Caco-2 (cell line): ENCODE measurements at regions of chr5 and their contacts with region 1.

Region 1: DNA sequence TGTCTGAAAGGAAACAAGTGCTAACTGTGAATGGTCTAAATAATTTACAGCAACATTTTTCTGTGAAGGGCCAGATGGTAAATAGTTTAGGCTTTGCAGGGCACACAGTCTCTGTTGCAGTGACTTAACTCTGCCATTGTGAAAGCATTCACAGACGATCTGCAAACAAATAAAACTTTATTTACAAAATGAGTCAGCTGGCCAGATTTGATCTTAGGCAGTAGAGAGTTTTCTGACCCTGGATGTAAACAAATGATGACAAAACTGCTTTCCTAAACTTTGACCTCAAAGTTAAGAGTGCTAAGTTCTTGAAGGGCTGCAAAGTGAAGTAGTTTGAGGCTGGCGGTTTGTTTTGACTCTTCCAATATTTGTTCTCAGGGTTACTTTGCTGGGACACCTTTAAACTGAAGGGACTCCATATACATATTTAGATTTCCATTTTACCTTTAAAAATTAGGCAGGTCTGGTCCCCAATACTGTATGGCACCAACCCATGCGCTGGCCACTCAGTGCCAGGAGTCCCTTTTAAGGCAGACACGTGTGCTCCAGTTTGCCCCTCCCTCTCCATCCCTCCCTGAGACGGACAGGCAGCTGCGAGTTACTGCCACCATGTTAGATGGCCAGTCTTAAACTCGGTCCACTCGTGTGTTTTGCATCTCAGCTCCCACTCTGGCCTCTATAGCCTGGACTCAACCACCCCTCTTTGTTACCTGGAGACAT is 4.0 kb upstream of the ADAMTS16 start:
- DNase-seq: peak in 1 of 2 experiments; percentile 63
- H3K4me3 ChIP-seq: no peak overlapping the region
- H3K4me3 Mint-ChIP-seq: peak overlapping the region; percentile 44
- H3K27ac Mint-ChIP-seq: peak overlapping the region; percentile 71
- H3K4me1 ChIP-seq: peaks cover 19% of the 10 kb centered on the region
- H3K4me1 Mint-ChIP-seq: peaks cover 13% of the 10 kb centered on the region
- H3K27me3 ChIP-seq: no peaks in the 10 kb centered on the region
- H3K27me3 Mint-ChIP-seq: no peaks in the 10 kb centered on the region
- CTCF ChIP-seq: no peak

Region 2: GRCh38 chr5:4879693-4880303 is 256.3 kb before region 1 on chr5:
- CTCF ChIA-PET with region 1: no interaction called
- POLR2A ChIA-PET with region 1: no interaction called
- intact Hi-C with region 1: loop called (anchors 1 kb)
- DNase-seq: peak; percentile 77 to 87
- H3K4me3 ChIP-seq: no peak overlapping the region
- H3K4me3 Mint-ChIP-seq: no peak overlapping the region
- H3K27ac Mint-ChIP-seq: peak overlapping the region; percentile 38
- H3K4me1 ChIP-seq: no peaks in the 10 kb centered on the region
- H3K4me1 Mint-ChIP-seq: no peaks in the 10 kb centered on the region
- H3K27me3 ChIP-seq: no peaks in the 10 kb centered on the region
- H3K27me3 Mint-ChIP-seq: no peaks in the 10 kb centered on the region
- CTCF ChIP-seq: peak; percentile 94 to 96

Region 3: DNA sequence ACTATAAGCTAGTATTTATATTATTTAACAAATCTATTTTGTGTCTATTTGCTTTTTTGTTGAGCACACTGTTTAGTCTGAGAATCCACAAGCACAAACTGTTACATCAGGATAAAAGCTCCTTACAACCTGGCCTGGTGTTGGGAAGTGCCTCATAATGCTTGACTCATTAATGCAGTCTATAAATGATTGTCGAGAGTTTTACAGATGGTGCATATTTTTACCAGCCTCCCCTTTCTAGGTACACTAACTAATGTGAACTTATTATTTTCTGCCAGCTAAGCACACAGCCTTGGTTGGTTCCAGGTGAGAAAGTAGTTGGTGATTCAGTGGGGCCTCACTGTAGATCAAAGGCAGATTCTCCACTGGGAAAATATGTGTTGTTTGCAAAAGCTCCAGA is 147.0 kb before region 1 on chr5:
- CTCF ChIA-PET with region 1: no interaction called
- POLR2A ChIA-PET with region 1: no interaction called
- intact Hi-C with region 1: loop called (anchors 1 kb)
- DNase-seq: peak in 1 of 2 experiments; percentile 34
- H3K4me3 ChIP-seq: no peak overlapping the region
- H3K4me3 Mint-ChIP-seq: no peak overlapping the region
- H3K27ac Mint-ChIP-seq: peak overlapping the region; percentile 76
- H3K4me1 ChIP-seq: peaks cover 30% of the 10 kb centered on the region
- H3K4me1 Mint-ChIP-seq: peaks cover 15% of the 10 kb centered on the region
- H3K27me3 ChIP-seq: no peaks in the 10 kb centered on the region
- H3K27me3 Mint-ChIP-seq: no peaks in the 10 kb centered on the region
- CTCF ChIP-seq: no peak

Region 4: GRCh38 chr5:5063533-5063953 is 72.6 kb before region 1 on chr5:
- CTCF ChIA-PET with region 1: no interaction called
- POLR2A ChIA-PET with region 1: no interaction called
- intact Hi-C with region 1: loop called (anchors 1 kb)
- DNase-seq: peak; percentile 86 to 88
- H3K4me3 ChIP-seq: no peak overlapping the region
- H3K4me3 Mint-ChIP-seq: peak overlapping the region; percentile 32
- H3K27ac Mint-ChIP-seq: peak overlapping the region; percentile 93
- H3K4me1 ChIP-seq: peaks cover 52% of the 10 kb centered on the region
- H3K4me1 Mint-ChIP-seq: peaks cover 38% of the 10 kb centered on the region
- H3K27me3 ChIP-seq: no peaks in the 10 kb centered on the region
- H3K27me3 Mint-ChIP-seq: no peaks in the 10 kb centered on the region
- CTCF ChIP-seq: peak; percentile 48 to 49

Region 5: GRCh38 chr5:5217371-5217770 is 81.3 kb after region 1 on chr5:
- CTCF ChIA-PET with region 1: no interaction called
- POLR2A ChIA-PET with region 1: no interaction called
- intact Hi-C with region 1: no loop called
- DNase-seq: no peak
- H3K4me3 ChIP-seq: no peak overlapping the region
- H3K4me3 Mint-ChIP-seq: no peak overlapping the region
- H3K27ac Mint-ChIP-seq: no peak overlapping the region
- H3K4me1 ChIP-seq: no peaks in the 10 kb centered on the region
- H3K4me1 Mint-ChIP-seq: no peaks in the 10 kb centered on the region
- H3K27me3 ChIP-seq: no peaks in the 10 kb centered on the region
- H3K27me3 Mint-ChIP-seq: peaks cover 5% of the 10 kb centered on the region
- CTCF ChIP-seq: no peak

Region 6: DNA sequence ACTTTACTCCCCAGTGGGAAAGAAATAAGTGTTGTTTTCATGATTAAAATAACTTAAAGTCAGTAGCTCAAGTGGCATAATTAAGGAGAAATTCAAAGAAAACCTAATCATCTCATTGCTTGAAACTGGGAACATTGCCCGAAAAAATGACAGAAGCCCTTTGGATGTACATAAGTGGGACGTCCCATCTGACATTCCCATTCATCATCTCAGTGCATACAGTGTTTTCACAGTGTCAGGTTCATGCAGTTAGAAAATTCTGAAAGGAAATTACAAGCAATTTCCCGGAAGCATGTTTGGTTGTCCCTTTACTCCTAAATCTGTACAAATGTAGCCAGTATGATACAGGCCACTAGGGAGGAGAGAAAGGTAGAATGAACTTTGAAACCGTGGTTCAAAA is 99.6 kb after region 1 on chr5:
- CTCF ChIA-PET with region 1: no interaction called
- POLR2A ChIA-PET with region 1: no interaction called
- intact Hi-C with region 1: no loop called
- DNase-seq: no peak
- H3K4me3 ChIP-seq: no peak overlapping the region
- H3K4me3 Mint-ChIP-seq: no peak overlapping the region
- H3K27ac Mint-ChIP-seq: no peak overlapping the region
- H3K4me1 ChIP-seq: no peaks in the 10 kb centered on the region
- H3K4me1 Mint-ChIP-seq: no peaks in the 10 kb centered on the region
- H3K27me3 ChIP-seq: no peaks in the 10 kb centered on the region
- H3K27me3 Mint-ChIP-seq: peaks cover 10% of the 10 kb centered on the region
- CTCF ChIP-seq: no peak

Region 7: GRCh38 chr5:5335773-5336211 is 199.7 kb after region 1 on chr5:
- CTCF ChIA-PET with region 1: no interaction called
- POLR2A ChIA-PET with region 1: no interaction called
- intact Hi-C with region 1: loop called (anchors 1 kb)
- DNase-seq: peak; percentile 51 to 71
- H3K4me3 ChIP-seq: no peak overlapping the region
- H3K4me3 Mint-ChIP-seq: no peak overlapping the region
- H3K27ac Mint-ChIP-seq: peak overlapping the region; percentile 60
- H3K4me1 ChIP-seq: peaks cover 25% of the 10 kb centered on the region
- H3K4me1 Mint-ChIP-seq: peaks cover 22% of the 10 kb centered on the region
- H3K27me3 ChIP-seq: no peaks in the 10 kb centered on the region
- H3K27me3 Mint-ChIP-seq: no peaks in the 10 kb centered on the region
- CTCF ChIP-seq: no peak